PC-9 (cell line): ENCODE measurements at regions of chr3 and their contacts with region 1.

Region 1: DNA sequence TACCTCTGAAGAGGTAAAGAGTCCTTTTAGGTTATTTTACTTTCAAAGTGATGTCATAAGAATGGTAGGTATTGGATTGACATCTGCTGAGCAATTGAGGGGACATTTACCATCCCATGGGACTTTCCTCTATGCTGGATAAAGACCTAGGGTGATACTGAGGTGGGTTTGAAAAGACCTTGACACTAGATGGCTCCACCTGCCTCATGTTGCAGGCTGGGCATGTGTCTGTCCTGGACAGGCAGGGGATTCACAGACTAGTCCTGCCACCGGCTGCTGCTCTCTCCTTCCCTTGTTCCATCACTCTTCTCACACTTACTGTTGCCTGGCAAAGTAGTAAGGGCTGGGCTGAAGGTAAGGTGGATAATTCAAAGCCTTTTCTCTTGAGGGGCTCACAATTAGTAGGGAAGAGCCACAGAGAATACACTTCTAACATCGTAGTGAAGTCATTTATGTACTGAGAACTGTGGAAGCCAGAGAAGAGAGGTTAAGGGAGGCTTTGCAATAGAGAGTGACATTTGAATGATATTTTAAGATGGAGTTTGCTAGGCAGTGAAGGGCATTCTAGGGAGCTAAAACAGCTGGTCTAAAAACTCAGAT is 27.7 kb downstream of the TRAK1 start:
- DNase-seq: peak; percentile 53 to 68
- H3K4me3 ChIP-seq: no peak overlapping the region
- H3K27ac ChIP-seq: no peak overlapping the region
- H3K4me1 ChIP-seq: peaks cover 28% of the 10 kb centered on the region
- H3K27me3 ChIP-seq: no peaks in the 10 kb centered on the region
- CTCF ChIP-seq: peak; percentile 66

Region 2: GRCh38 chr3:42099011-42099765 is 19.7 kb before region 1 on chr3:
- CTCF ChIA-PET with region 1: interaction called, 3 read pairs
- POLR2A ChIA-PET with region 1: interaction called, 11 read pairs
- intact Hi-C with region 1: no loop called
- DNase-seq: no peak
- H3K4me3 ChIP-seq: no peak overlapping the region
- H3K27ac ChIP-seq: no peak overlapping the region
- H3K4me1 ChIP-seq: no peaks in the 10 kb centered on the region; the same call in 1 of the 2 replicates
- H3K27me3 ChIP-seq: no peaks in the 10 kb centered on the region
- CTCF ChIP-seq: no peak

Region 3: DNA sequence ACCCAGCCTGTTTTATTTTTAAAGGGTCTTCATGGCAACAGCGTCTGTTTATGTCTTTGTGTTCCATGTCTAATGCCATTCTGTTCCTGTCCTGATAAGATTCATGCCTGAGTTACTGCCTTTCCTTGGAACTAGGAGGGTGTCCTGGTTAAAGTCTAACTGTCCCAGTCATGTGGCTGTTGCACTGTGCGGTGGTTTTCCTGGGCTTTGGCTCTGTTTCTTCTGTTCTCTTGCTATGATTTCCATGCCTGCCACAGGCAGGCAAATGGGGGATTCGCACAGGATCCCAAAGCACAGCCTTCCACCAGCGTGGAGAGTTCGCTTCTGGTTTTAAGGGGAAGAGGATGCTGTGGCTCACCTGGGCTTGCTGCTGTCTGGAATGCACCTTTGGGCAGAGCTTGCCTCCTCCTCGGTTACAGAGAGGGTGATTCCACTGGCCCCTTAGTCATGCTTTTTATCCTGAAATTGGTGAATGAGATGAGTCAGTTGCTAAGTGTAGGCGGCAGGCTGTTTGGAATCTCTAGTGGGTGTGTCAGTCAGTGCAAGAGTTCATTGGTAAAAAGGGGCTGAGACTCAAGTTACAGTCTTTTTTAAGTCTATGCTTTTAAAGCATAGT is 60.4 kb after region 1 on chr3:
- CTCF ChIA-PET with region 1: interaction called, 12 read pairs
- POLR2A ChIA-PET with region 1: interaction called, 5 read pairs
- intact Hi-C with region 1: loop called (anchors 5 kb)
- DNase-seq: peak; percentile 77 to 94
- H3K4me3 ChIP-seq: peak overlapping the region; percentile 26; the same call in 1 of the 2 replicates
- H3K27ac ChIP-seq: peak overlapping the region; percentile 76
- H3K4me1 ChIP-seq: peaks cover 20% of the 10 kb centered on the region
- H3K27me3 ChIP-seq: no peaks in the 10 kb centered on the region
- CTCF ChIP-seq: no peak

Region 4: DNA sequence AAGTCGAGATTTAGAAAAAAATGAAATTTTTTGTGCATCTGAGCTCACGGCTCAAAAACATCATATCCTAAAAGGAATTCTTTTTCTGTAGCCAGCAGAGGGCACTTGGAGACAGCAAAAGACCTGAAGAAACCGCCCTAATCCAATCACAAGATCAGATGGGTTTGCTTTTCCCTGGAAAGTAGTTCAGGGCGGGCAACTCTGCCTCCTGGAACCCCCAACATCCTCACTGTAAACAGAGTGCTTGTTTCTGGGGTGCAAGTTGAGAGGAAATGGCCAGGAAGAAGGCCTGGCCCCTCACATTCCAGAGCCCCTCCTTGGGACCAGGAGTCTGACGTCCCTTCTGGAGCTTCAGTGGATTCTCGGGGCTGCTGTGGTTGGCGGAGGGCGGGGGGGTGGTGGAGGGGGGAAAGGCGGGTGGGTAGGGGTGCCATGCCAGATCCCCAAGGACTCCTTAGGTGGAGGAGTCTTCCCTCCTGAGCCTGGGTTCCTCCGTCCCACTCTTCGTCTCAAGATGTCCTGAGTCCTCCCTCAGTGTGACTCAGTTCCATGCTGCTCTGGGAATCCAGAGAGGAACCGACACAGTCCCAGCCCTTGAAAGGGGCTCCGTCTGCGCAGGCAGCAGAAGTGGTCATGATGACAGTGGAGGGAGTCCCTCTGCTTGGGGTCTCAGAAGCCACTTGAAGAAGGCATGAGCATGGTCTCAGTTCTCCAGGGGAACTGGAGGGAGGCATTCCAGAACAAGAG is 111.3 kb after region 1 on chr3:
- CTCF ChIA-PET with region 1: interaction called, 7 read pairs
- POLR2A ChIA-PET with region 1: no interaction called
- intact Hi-C with region 1: loop called (anchors 1 kb)
- DNase-seq: peak; percentile 30 to 42
- H3K4me3 ChIP-seq: no peak overlapping the region
- H3K27ac ChIP-seq: no peak overlapping the region
- H3K4me1 ChIP-seq: no peaks in the 10 kb centered on the region
- H3K27me3 ChIP-seq: no peaks in the 10 kb centered on the region
- CTCF ChIP-seq: peak; percentile 71

Region 5: GRCh38 chr3:42547401-42547945 is 428.6 kb after region 1 on chr3:
- CTCF ChIA-PET with region 1: no interaction called
- POLR2A ChIA-PET with region 1: no interaction called
- intact Hi-C with region 1: loop called (anchors 5 kb)
- DNase-seq: peak in 1 of 2 experiments; percentile 55
- H3K4me3 ChIP-seq: no peak overlapping the region
- H3K27ac ChIP-seq: no peak overlapping the region
- H3K4me1 ChIP-seq: 0 out of 2 replicates have a peak, but pooled peaks cover 9% of the 10 kb centered on the region
- H3K27me3 ChIP-seq: no peaks in the 10 kb centered on the region
- CTCF ChIP-seq: peak; percentile 90